Posterior vena cava (tissue), 2 donors: ENCODE measurements at regions of chr10 and their contacts with region 1.

Region 1: DNA sequence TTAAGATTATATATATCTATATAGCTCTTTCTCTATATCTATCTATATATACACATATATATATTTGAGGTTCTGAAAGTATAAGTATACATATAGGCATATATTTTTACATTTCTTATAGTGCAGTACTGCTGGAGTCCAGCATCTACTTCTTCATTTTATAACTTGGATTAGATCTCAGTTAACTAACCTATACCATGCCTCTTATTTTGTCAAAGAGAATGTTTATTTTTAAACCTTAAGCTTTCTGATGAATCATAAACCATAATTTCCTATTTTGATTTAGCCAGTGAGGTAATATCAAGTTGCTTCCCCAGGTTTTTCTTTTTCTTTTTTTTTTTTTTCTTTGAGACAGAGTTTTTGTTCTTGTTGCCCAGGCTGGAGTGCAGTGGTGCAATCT is 8.1 kb downstream of the ZNF32 start:
- DNase-seq: no peak

Region 2: DNA sequence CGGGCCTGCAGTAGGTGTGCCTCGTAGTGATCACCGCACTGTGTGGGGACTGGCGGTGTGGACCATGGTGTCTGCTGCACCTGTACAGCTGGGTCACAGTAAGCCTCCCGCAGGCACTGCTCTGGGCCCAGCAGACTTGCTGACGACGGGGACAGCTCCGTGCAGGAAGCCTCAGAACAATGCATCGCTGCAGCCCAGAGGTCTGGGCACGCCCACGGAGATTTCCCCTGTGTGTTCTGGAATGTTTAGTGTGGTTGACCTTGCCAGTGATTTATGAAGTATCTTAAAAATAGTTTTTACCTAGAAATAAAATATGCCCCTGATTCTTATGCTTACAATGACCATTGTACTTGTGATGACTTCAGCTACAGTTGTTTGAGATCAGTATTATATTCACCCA is 67.2 kb after region 1 on chr10:
- intact Hi-C with region 1: loop called in 1 of 2 experiments (anchors 2 kb)
- DNase-seq: no peak